Right ventricle myocardium inferior (tissue), 1 donor: ENCODE measurements at regions of chr3 and their contacts with region 1.

Region 1: GRCh38 chr3:101849051-101849720 is at the start of gene NFKBIZ:
- DNase-seq: peak; percentile 98
- ATAC-seq: peak; percentile 95
- total RNA-seq, gene NFKBIZ: 14.8 TPM

Region 2: DNA sequence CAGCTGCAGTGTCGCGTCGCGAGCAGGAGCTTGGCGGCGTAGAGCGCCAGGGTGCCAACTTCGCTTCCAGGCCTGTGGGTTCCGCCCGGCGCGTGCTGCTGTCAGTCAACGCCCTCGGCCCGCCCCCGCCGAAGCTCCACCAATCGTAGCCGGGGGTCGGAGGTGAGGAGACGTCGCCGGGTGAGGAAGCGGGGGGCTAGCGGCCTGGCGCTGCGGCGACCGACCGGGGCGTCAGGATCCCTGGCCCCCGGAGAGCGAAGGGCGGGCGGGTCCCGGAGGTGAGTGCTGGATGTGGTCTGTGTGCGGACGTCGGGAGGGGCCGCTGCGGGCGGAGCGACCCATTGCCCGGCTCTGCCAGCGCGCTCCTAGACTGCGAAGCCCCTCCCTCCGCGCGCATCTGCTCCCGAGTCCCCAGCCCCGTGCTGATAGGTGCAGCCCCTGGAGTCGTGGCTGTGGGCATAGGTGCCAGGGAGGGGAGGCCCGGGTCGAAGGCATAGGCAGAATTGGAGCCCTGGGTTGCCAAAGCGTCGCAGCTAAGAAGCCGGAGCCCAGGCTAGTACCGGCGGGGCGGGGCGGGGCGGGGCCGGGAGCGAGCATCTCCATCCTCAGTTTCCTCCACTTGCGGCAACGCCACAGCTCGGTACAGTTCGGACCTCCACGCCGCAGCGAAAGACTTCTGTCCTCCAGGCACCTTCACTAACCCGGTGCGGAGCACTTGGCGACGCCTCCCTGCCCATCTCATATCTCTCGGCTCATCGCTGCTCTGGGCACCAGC is 70.0 kb before region 1 on chr3 and contains the start of gene NXPE3:
- intact Hi-C with region 1: no loop called
- DNase-seq: peak; percentile 97
- ATAC-seq: peak; percentile 96
- total RNA-seq, gene NXPE3: 42.0 TPM

Region 3: DNA sequence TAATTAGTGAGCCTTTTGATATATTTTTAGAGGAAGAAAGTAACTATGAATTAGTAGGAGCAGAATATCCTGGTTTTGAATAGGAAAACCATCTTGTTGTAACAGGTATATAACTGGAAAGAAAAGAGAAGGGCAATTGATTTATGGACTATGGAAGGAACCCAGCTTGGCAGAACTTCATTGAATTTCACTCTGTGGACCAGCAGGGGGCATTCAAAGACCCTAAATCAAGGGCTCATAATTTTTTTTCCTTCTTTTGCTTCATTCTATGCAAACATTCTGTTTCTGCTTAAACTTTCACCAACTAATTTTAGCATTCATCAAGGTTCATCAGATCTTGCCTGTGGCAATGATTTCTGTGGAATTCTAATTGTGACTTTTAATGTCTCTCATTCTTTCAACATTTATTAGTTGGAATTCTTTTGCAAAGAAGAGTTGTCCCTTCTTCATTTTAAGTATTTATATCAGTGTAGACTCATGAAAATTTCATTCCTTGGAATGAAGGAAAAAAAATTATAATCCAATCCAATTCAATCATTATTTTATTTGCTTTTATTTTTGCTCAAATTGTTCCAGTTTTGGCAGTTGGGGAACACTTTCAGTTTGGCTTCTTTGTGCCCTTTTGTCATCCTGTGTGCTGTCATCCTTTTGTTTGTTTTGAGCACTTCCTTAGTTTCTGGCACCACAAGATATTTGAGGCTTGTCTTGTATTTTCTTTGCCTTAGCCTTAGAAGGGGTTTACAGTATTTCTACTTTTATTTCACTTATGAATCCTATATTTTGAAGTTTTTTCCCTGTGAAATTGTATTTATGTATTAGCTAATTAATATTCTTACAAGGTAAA is 39.8 kb before region 1 on chr3:
- intact Hi-C with region 1: loop called (anchors 5 kb)
- DNase-seq: no peak
- ATAC-seq: no peak

Region 4: GRCh38 chr3:101827211-101828174 is 21.7 kb before region 1 on chr3:
- intact Hi-C with region 1: loop called (anchors 2 kb)
- DNase-seq: peak; percentile 84
- ATAC-seq: peak; percentile 82

Region 5: GRCh38 chr3:102129760-102130608 is 280.8 kb after region 1 on chr3:
- intact Hi-C with region 1: loop called (anchors 2 kb)
- DNase-seq: no peak
- ATAC-seq: peak; percentile 87

Region 6: DNA sequence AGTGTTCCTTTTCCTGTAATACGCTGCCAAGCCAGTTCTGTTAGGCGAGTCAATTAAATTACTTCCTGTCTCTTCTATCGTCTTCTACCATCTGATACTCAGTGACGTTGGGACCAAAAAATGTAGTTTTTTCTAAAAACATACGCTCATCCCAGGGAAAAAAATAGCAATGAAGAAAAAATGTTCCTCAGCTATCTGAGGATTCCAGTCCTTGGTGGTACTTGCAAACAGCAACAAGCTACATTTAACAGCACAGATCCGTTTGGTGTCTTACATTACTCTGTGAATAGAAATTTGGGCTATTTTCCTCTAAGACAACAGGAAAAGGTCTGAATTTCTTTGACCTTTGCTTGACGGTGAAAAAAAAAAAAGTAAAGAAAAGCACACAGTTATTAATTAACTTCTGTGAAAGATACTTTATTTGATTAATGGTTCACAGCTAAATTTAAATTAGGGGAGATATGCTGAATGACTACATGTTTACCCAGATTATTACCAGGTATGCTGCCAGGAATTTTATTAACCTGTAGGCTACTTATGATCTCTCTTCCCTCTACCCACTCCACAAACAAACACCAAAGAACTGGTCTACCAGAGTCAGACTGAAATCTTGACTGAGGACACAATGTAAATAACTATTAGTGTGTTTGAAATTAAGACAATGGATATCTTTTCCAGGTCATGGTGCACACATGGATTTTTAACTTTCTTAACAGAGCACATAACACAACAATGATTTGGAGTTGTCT is 331.3 kb after region 1 on chr3:
- intact Hi-C with region 1: loop called (anchors 5 kb)
- DNase-seq: no peak
- ATAC-seq: peak; percentile 67

Region 7: GRCh38 chr3:102790747-102791325 is 941.6 kb after region 1 on chr3:
- intact Hi-C with region 1: no loop called
- DNase-seq: no peak
- ATAC-seq: no peak